ENCODE measurements at regions of chr3 and their contacts with region 1.

Region 1: GRCh38 chr3:133125171-133125570 is 87.0 kb downstream of the TMEM108 start:
- DNase-seq: no peak
- ATAC-seq: no peak
- H3K4me3 ChIP-seq: no peak overlapping the region
- H3K27ac ChIP-seq: no peak overlapping the region
- H3K4me1 ChIP-seq: peaks cover 0 to 2% of the 10 kb centered on the region in 2 experiments; a peak in 2 of 5 replicates
- H3K27me3 ChIP-seq: no peaks in the 10 kb centered on the region
- CTCF ChIP-seq: no peak
- EP300 ChIP-seq: no peak
- POLR2A ChIP-seq: no peak
- RAD21 ChIP-seq: no peak

Region 2: DNA sequence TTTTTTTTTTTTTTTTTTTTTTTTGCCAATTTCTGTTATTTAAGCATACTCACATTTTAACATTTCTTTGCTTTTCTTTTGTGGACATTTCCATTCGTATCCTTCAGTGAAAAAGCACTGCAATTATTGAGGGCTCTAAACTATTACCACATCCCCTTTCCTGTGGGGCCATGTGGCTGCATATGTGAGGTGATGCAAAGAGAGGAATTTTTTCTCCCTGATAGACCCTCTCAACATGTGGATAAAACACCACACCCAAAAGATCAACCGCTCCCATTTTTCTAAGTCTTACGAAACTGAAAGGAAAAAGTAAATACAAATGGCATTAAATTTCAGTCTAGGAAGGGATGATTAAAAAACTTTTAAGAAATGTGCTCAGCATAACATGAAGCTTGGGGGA is 639.1 kb before region 1 on chr3:
- CTCF ChIA-PET with region 1: no interaction called
- POLR2A ChIA-PET with region 1: no interaction called
- in situ Hi-C with region 1: no loop called
- intact Hi-C with region 1: no loop called
- DNase-seq: no peak
- ATAC-seq: no peak
- H3K4me3 ChIP-seq: no peak overlapping the region
- H3K27ac ChIP-seq: no peak overlapping the region
- H3K4me1 ChIP-seq: no peaks in the 10 kb centered on the region
- H3K27me3 ChIP-seq: no peaks in the 10 kb centered on the region
- CTCF ChIP-seq: no peak
- EP300 ChIP-seq: no peak
- POLR2A ChIP-seq: no peak
- RAD21 ChIP-seq: no peak

Region 3: DNA sequence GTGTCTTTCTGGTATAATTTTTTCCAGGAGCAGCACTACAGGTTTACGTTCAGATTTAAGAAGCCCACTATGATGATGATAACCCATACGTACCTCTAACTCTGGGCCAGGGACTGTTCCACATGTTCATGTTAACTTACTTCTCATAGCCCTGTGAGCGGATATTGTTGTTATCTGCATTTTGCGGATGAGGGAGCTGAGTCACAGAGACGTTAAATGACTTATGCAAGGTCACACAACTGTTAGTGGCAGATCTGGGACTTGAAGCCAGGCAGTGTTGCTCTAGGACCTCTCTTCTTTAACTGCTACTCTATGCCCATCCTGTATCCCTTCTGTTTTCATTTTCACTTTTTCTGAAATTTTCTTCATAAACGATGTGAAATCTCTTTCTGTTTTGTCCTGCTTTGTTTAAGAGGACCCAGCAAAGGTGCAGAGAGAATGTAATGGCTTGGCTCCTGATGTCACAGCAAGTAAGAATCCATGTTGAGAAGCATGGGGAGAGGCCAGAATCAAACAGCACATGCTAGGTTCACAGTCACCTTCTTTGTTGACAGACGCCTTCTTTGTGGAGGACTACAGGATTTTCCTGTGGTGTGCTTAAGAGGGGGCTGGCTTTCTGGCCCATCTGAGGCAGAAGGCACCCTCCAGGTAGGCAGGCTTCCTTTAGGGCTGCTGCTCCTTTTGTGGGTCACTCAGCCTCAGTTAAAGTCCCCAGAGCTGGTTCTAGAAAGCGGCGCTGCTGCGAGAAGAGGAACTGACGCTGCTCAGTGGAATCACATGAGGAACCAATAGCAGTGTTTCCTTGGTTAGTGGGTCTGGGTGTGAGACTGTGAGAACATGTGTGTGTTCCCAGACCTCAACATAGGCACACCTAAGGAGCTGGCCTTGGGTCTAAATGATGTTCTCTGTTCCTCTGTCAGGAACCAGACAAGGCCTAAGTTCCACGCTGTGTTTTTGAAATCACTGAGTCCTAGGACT is 34.6 kb after region 1 on chr3:
- CTCF ChIA-PET with region 1: no interaction called
- POLR2A ChIA-PET with region 1: no interaction called
- in situ Hi-C with region 1: loop called (anchors 5 kb)
- intact Hi-C with region 1: no loop called
- DNase-seq: peak; percentile 17 to 77 (median 38)
- ATAC-seq: peak; percentile 92
- H3K4me3 ChIP-seq: no peak overlapping the region
- H3K27ac ChIP-seq: peak overlapping the region; percentile 86
- H3K4me1 ChIP-seq: peaks cover 0 to 29% of the 10 kb centered on the region in 2 experiments; a peak in 4 of 5 replicates
- H3K27me3 ChIP-seq: no peaks in the 10 kb centered on the region
- CTCF ChIP-seq: no peak
- EP300 ChIP-seq: peak; percentile 84; the same call in 1 of the 2 replicates
- POLR2A ChIP-seq: no peak; the same call in 1 of the 2 replicates
- RAD21 ChIP-seq: no peak